Activated naive CD4-positive, alpha-beta T cell treated with anti-CD3 and anti-CD28 coated beads for 36 hours (primary cell): ENCODE measurements at regions of chr5 and their contacts with region 1.

Region 1: GRCh38 chr5:55936100-55936693 is 58.6 kb downstream of the IL6ST start:
- DNase-seq: peak; percentile 93
- H3K4me3 Mint-ChIP-seq: no peak overlapping the region
- H3K27ac Mint-ChIP-seq: no peak overlapping the region
- H3K4me1 Mint-ChIP-seq: peaks cover 15% of the 10 kb centered on the region
- H3K27me3 Mint-ChIP-seq: no peaks in the 10 kb centered on the region

Region 2: DNA sequence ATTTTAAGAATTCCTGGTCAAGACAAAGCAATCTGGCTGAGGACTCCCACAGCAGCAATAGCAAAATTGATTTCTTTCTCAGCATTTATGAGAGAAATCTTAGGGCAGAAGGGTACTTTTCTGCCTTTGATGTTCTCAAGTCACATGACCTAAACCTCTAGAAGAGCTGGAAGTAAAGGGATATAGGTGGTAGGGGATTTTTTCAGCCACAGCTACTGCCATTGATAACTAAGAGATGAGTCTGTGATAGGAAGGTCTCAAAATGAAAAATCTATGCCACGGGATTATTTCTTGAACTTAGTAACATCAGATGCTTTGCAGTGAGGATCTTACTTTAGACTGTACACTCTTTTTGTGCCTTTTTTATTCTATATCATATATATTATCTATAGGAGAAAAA is 23.0 kb after region 1 on chr5:
- CTCF ChIA-PET with region 1: interaction called, 21 read pairs
- intact Hi-C with region 1: no loop called
- DNase-seq: no peak
- H3K4me3 Mint-ChIP-seq: no peak overlapping the region
- H3K27ac Mint-ChIP-seq: peak overlapping the region; percentile 55
- H3K4me1 Mint-ChIP-seq: peaks cover 36% of the 10 kb centered on the region
- H3K27me3 Mint-ChIP-seq: no peaks in the 10 kb centered on the region

Region 3: DNA sequence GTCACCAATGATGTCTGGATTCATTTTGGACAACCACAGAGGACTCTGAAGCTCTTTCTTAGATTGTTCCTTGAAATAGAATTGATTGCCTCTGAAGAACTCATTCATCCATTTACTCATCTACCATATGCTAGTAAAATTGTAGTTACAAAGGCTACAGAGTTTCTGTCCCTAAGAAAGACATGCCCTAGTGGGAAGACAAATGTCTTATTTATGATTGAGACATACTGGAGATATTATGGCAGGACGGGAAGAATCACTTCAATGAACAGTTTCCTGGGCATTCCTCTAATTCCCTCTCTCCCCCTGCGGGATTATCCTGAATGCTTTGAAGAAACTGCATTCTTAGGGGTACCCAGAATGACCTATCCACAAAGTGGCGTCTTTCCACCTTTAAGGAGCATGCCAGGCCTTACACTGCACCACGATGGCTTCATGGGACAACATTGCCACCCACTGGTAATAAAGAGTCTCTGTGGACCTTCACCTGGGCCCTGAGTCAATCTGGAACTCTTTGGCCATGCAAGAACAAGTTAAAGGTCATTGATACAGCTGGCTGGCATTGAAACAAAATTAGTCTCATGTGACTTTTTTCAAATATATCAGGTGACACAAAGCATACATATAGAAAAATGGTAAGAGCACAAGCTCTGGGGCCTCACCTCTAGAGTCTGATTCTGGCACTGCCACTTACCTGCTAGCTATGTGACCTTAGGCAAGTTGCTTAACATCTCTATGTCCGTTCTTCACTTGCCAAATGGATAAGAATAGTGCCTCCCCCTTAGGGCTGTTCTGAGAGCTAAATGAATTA is 264.9 kb after region 1 on chr5:
- CTCF ChIA-PET with region 1: interaction called, 123 read pairs
- intact Hi-C with region 1: loop called (anchors 1 kb)
- DNase-seq: peak; percentile 83
- H3K4me3 Mint-ChIP-seq: no peak overlapping the region
- H3K27ac Mint-ChIP-seq: no peak overlapping the region
- H3K4me1 Mint-ChIP-seq: peaks cover 28% of the 10 kb centered on the region
- H3K27me3 Mint-ChIP-seq: no peaks in the 10 kb centered on the region

Region 4: GRCh38 chr5:56710826-56711590 is 774.8 kb after region 1 on chr5:
- CTCF ChIA-PET with region 1: no interaction called
- intact Hi-C with region 1: no loop called
- DNase-seq: no peak
- H3K4me3 Mint-ChIP-seq: no peak overlapping the region
- H3K27ac Mint-ChIP-seq: no peak overlapping the region
- H3K4me1 Mint-ChIP-seq: peaks cover 14% of the 10 kb centered on the region
- H3K27me3 Mint-ChIP-seq: no peaks in the 10 kb centered on the region